ENCODE measurements at regions of chr22 and their contacts with region 1.

Region 1: GRCh38 chr22:40436505-40437451 is 66.4 kb downstream of the SGSM3 start:
- DNase-seq: peak; percentile 70
- H3K4me3 ChIP-seq: no peak overlapping the region
- H3K27ac ChIP-seq: no peak overlapping the region
- H3K4me1 ChIP-seq: peaks cover 2% of the 10 kb centered on the region
- H3K27me3 ChIP-seq: no peaks in the 10 kb centered on the region
- CTCF ChIP-seq: peak in 1 of 2 donors; percentile 52
- POLR2A ChIP-seq: no peak

Region 2: DNA sequence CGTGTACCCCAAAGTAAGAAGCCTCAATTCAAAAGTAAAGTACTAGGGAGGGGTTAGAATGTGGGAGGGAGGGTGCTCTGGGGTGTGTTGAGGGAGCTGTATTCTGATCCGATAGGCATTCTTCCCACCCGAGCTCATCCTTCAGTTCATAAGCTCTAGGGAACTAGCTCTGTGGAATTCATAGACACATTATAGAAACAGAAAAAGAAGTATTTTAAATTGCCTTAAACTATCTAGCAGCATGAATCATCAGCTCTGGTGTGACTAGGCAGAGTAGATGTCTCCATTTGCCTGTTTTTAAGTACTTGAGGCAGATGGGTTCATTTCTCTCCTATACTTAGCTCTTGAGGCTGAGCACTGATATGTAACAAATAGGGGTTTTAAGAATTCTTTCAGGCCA is 73.7 kb before region 1 on chr22:
- CTCF ChIA-PET with region 1: no interaction called
- POLR2A ChIA-PET with region 1: no interaction called
- dilution Hi-C with region 1: no loop called
- intact Hi-C with region 1: no loop called
- DNase-seq: no peak
- H3K4me3 ChIP-seq: no peak overlapping the region
- H3K27ac ChIP-seq: no peak overlapping the region
- H3K4me1 ChIP-seq: peaks cover 10% of the 10 kb centered on the region
- H3K27me3 ChIP-seq: no peaks in the 10 kb centered on the region
- CTCF ChIP-seq: no peak
- POLR2A ChIP-seq: no peak

Region 3: GRCh38 chr22:40426594-40427333 is 10.0 kb before region 1 on chr22:
- CTCF ChIA-PET with region 1: interaction called, 21 read pairs
- POLR2A ChIA-PET with region 1: no interaction called
- dilution Hi-C with region 1: no loop called
- intact Hi-C with region 1: no loop called
- DNase-seq: peak; percentile 28
- H3K4me3 ChIP-seq: no peak overlapping the region
- H3K27ac ChIP-seq: no peak overlapping the region
- H3K4me1 ChIP-seq: no peaks in the 10 kb centered on the region
- H3K27me3 ChIP-seq: no peaks in the 10 kb centered on the region
- CTCF ChIP-seq: no peak
- POLR2A ChIP-seq: no peak

Region 4: DNA sequence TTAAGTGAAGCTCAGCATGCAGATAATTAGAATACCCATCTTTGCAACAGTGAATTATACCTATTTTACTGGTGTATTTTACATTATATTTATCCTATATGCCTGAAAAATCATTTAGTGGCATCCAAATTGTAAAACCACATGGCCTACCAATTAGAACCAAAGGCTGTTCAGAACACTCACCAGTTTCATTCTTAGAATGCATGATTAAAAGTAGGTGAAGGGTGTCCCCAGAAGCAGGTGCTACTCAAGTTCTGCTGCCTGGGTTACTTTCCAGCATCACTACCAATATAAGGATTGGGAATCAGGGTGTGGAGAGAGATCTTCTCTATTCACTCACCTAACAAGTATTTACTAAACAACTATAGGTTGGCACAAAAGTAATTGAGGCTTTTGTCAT is 36.9 kb after region 1 on chr22:
- CTCF ChIA-PET with region 1: interaction called, 14 read pairs
- POLR2A ChIA-PET with region 1: no interaction called
- dilution Hi-C with region 1: no loop called
- intact Hi-C with region 1: no loop called
- DNase-seq: no peak
- H3K4me3 ChIP-seq: no peak overlapping the region
- H3K27ac ChIP-seq: no peak overlapping the region
- H3K4me1 ChIP-seq: no peaks in the 10 kb centered on the region
- H3K27me3 ChIP-seq: no peaks in the 10 kb centered on the region
- CTCF ChIP-seq: no peak
- POLR2A ChIP-seq: no peak

Region 5: GRCh38 chr22:40525249-40525884 is 88.6 kb after region 1 on chr22:
- CTCF ChIA-PET with region 1: interaction called, 32 read pairs
- POLR2A ChIA-PET with region 1: no interaction called
- dilution Hi-C with region 1: no loop called
- intact Hi-C with region 1: no loop called
- DNase-seq: peak; percentile 65
- H3K4me3 ChIP-seq: no peak overlapping the region
- H3K27ac ChIP-seq: no peak overlapping the region
- H3K4me1 ChIP-seq: peaks cover 2% of the 10 kb centered on the region
- H3K27me3 ChIP-seq: no peaks in the 10 kb centered on the region
- CTCF ChIP-seq: peak; percentile 81 to 84
- POLR2A ChIP-seq: no peak

Region 6: DNA sequence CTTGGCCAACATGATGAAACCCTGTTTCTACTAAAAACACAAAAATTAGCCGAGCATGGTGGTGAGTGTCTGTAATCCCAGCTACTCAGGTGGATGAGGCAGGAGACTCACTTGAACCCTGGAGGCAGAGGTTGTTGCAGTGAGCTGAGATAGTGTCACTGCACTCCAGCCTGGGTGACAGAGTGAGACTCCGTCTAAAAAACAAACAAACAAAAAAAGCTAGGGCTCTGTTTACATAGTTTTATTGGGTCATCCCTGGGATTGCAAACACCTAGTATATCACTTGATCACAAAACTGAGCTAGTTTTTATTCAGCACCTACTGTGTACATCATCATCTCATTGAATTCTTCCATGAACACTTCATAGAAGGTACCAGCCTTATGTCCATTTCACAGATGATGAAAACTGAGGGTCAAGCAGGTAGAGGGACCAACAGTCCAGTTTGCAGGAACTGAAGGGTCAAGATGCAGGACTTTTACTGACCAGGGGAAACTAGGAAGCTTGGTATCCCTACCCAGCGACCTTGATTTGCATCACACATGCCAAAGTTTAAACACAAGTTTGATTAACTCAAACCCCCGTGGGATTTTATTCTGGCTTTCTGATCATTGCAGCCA is 208.9 kb after region 1 on chr22:
- CTCF ChIA-PET with region 1: interaction called, 111 read pairs
- POLR2A ChIA-PET with region 1: no interaction called
- dilution Hi-C with region 1: no loop called
- intact Hi-C with region 1: loop called (anchors 1 kb)
- DNase-seq: no peak
- H3K4me3 ChIP-seq: no peak overlapping the region
- H3K27ac ChIP-seq: no peak overlapping the region
- H3K4me1 ChIP-seq: peaks cover 6% of the 10 kb centered on the region
- H3K27me3 ChIP-seq: no peaks in the 10 kb centered on the region
- CTCF ChIP-seq: no peak
- POLR2A ChIP-seq: no peak

Region 7: GRCh38 chr22:40757071-40757470 is 320.3 kb after region 1 on chr22:
- CTCF ChIA-PET with region 1: interaction called, 34 read pairs
- POLR2A ChIA-PET with region 1: no interaction called
- dilution Hi-C with region 1: no loop called
- intact Hi-C with region 1: no loop called
- DNase-seq: no peak
- H3K4me3 ChIP-seq: no peak overlapping the region
- H3K27ac ChIP-seq: no peak overlapping the region
- H3K4me1 ChIP-seq: no peaks in the 10 kb centered on the region
- H3K27me3 ChIP-seq: no peaks in the 10 kb centered on the region
- CTCF ChIP-seq: no peak
- POLR2A ChIP-seq: no peak